ENCODE measurements at regions of chr5 and their contacts with region 1.

Region 1: DNA sequence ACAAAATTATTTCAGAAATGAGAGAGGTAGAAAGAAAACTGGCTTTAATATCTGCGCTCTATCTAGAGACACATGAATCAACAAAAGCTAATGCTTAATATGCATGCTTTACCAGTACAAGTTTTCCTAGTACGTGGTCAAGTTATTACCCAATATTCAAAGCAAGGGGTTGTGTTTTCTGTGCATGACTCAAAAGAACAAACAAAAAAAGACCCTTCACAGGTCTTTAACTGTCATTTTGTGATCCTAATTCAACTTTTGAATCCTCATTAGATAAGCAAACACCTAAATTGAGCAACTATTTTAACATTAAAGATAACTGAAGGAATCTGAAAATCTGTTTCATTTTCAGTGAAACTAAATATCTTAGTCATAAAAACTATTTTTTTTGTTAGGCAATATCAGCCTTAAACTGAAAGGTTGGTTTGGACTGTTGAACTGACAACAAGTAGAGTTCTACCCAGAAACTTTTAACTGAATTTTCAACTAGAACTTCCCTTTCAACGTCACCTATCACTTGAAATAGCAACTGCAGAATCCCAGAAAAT is 12.5 kb downstream of the ST8SIA4 start:
- DNase-seq: no peak
- H3K4me3 Mint-ChIP-seq: peak overlapping the region; percentile 75
- H3K27ac Mint-ChIP-seq: peak overlapping the region; percentile 93
- H3K4me1 Mint-ChIP-seq: peaks cover 74% of the 10 kb centered on the region
- H3K27me3 Mint-ChIP-seq: no peaks in the 10 kb centered on the region

Region 2: DNA sequence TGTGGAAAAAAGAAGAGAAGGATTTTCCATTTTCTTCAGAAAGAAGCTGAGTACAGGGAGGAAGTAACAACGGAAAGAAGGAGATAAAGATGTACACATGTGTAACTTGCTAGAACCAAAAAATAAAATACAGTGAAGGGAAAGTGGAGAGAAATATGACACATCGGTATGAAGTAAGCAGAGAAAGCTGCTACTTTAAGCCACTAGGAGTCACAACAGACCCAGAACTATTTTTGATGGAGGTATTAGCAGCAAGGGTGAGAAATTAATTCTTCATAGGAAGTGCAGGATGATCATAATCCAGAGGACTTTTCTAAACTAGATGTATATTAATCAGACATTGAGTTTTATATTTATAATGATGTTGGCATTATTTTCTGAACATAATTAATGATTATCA is 266.8 kb before region 1 on chr5:
- intact Hi-C with region 1: no loop called
- DNase-seq: no peak
- H3K4me3 Mint-ChIP-seq: no peak overlapping the region
- H3K27ac Mint-ChIP-seq: no peak overlapping the region
- H3K4me1 Mint-ChIP-seq: peaks cover 4% of the 10 kb centered on the region
- H3K27me3 Mint-ChIP-seq: peaks cover 20% of the 10 kb centered on the region

Region 3: GRCh38 chr5:100852988-100853449 is 37.5 kb before region 1 on chr5:
- intact Hi-C with region 1: loop called (anchors 1 kb)
- DNase-seq: no peak
- H3K4me3 Mint-ChIP-seq: peak overlapping the region; percentile 72
- H3K27ac Mint-ChIP-seq: peak overlapping the region; percentile 97
- H3K4me1 Mint-ChIP-seq: peaks cover 42% of the 10 kb centered on the region
- H3K27me3 Mint-ChIP-seq: no peaks in the 10 kb centered on the region

Region 4: GRCh38 chr5:100860407-100860806 is 30.1 kb before region 1 on chr5:
- intact Hi-C with region 1: loop called (anchors 1 kb)
- DNase-seq: no peak
- H3K4me3 Mint-ChIP-seq: peak overlapping the region; percentile 64
- H3K27ac Mint-ChIP-seq: peak overlapping the region; percentile 93
- H3K4me1 Mint-ChIP-seq: peaks cover 66% of the 10 kb centered on the region
- H3K27me3 Mint-ChIP-seq: no peaks in the 10 kb centered on the region

Region 5: DNA sequence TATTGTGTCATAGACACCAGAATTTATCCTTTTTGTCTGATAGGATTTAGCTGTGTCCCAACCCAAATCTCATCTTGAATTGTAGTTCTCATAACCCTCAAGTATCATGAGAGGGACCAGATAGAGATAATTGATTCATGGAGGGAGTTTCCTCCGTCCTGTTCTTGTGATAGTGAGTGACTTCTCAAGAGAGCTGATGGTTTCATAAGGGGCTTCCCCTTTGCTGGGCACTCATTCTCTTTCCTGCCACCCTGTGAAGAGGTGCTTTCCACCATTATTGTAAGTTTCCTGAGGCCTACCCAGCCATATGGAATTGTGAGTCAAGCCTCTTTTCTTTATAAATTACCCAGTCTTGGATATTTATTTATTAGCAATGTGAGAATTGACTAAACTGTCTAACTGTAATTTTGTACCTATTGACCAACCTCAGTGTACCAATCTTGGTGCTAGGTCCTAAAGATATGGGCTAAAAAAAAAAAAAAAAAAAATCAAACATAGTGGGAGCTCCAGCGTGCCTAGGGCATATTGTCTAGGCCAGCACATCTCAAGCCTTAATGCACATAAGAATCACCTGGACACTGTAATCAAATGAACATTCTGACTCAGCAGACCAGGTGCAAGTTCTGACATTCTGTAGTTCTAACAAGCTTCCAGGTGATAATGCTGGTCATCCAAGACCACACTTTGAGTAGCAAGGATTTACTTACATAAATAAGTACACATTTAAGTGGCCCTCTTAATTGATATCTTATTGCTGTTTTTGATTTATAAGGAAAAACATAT is 17.9 kb before region 1 on chr5:
- intact Hi-C with region 1: loop called (anchors 1 kb)
- DNase-seq: no peak
- H3K4me3 Mint-ChIP-seq: no peak overlapping the region
- H3K27ac Mint-ChIP-seq: peak overlapping the region; percentile 61
- H3K4me1 Mint-ChIP-seq: peaks cover 63% of the 10 kb centered on the region
- H3K27me3 Mint-ChIP-seq: no peaks in the 10 kb centered on the region

Measured in activated T-helper 2 cell treated with anti-CD3 and anti-CD28 coated beads, Interferon-gamma antibody, Interleukin-2, Interleukin-4, amounts not matched to agents 10 μg/mL and 5 μg/mL and 100 μg/mL, durations not matched to agents 14 hours and 24 hours and 36 hours (primary cell).